Kidney (tissue), 22 donors: ENCODE measurements at regions of chr1 and their contacts with region 1.

Region 1: DNA sequence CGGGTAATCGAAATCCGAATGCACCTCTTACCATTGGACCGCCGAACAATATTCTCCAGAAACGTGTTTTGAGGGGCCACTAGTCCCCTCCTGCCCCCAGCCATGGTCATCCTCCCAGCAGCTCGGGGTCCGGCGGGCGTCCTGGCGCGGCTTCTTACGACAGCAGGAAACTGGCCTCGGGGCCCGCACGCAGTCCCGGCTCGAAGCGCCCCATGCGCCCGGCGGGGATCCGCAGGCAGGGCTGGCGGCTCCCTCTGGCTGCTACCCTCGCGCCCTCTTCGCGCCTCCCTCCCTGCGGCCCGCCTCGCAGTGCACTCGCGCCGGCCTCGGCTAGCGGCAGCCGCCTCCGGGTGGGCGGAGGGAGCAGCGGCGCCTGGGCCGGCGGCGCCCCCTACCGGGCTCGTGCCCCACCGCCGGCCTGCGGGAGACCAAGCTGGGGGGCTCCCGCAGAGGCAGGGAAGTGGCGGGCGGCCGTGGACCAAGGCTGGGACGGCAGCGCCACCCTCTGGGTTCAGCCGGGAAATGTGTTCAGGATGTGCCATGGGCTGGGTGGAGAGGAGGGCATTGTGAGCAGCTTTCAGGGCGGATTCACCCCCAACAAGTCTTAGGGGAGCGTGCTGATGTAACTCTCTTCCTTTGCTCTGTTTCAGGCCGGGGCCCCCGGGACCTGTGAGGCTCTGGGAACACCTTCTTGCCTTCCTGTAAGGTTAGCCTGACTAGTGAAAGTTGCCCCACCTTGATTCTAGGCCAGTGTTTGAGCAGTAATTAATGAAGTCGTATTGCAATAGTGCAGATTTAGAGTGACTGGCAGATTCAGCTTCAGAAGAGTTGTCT is at the start of gene KCNH1:
- DNase-seq: peak; percentile 90 to 94 (median 92)
- H3K4me3 ChIP-seq: peak within 1 kb of the TSS in 1 of 3 donors; percentile 42
- H3K27ac ChIP-seq: no peak within 1 kb of the TSS
- H3K4me1 ChIP-seq: peaks cover 0 to 5% (median 0%) of the 10 kb centered on the region in 3 donors
- H3K27me3 ChIP-seq: peaks cover 20% of the 10 kb centered on the region
- CTCF ChIP-seq: peak; percentile 83
- total RNA-seq, gene KCNH1: 0.54 TPM

Region 2: DNA sequence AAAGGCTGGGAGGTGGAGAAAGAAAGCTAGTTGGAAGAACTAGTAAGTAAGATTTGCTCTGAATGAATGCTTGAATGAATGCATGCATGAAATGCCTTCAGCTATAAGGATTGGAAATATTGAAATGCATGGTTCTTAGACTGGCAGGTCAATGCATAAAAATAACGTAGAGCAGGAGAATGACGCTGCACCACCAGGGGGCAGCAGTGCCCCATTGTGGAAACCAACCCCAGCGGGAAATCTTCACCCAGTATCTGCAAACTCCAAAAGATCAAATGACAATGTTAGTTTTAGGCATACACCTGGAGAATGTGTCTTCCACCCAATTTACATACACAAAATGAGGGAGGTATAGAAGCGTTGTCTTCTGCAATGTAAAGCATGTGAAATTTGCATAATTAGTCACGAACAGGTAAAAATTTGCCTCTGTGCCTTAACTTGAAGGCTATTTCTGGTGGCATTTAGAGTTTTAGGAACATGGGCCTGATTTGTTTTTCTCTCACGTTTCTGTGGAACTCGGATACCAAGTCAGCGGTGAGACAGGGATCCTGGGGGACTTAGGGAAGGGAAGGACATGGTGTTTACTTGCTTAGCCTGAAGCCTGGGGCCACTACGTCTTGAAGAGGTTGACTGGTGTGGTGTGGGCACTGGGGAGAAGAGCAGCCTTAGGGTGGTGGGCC is 726.7 kb before region 1 on chr1:
- intact Hi-C with region 1: loop called (anchors 5 kb)
- DNase-seq: peak; percentile 67 to 81 (median 72)
- H3K4me3 ChIP-seq: no peak overlapping the region
- H3K27ac ChIP-seq: no peak overlapping the region
- H3K4me1 ChIP-seq: no peaks in the 10 kb centered on the region
- H3K27me3 ChIP-seq: no peaks in the 10 kb centered on the region
- CTCF ChIP-seq: peak; percentile 95